HCT116 (cell line): ENCODE measurements at regions of chr4 and their contacts with region 1.

Region 1: GRCh38 chr4:122758033-122758432 is 25.5 kb downstream of the BBS12 start:
- DNase-seq: peak; percentile 28
- ATAC-seq: peak; percentile 66
- H3K4me3 ChIP-seq: no peak overlapping the region
- H3K27ac ChIP-seq: no peak overlapping the region
- H3K4me1 ChIP-seq: peaks cover 0 to 5% of the 10 kb centered on the region in 2 experiments; a peak in 2 of 4 replicates
- H3K27me3 ChIP-seq: no peaks in the 10 kb centered on the region
- CTCF ChIP-seq: peak; percentile 47 to 81 (median 74); a peak in 4 of 6 replicates
- POLR2A ChIP-seq: no peak
- RAD21 ChIP-seq: peak; percentile 83

Region 2: GRCh38 chr4:122732329-122733026 is 25.6 kb before region 1 on chr4 and contains the start of gene BBS12:
- CTCF ChIA-PET with region 1: interaction called, 11 read pairs
- POLR2A ChIA-PET with region 1: no interaction called
- RAD21 ChIA-PET with region 1: no interaction called
- intact Hi-C with region 1: no loop called
- DNase-seq: peak; percentile 98
- ATAC-seq: peak; percentile 97
- H3K4me3 ChIP-seq: peak within 1 kb of the TSS; percentile 78 to 83
- H3K27ac ChIP-seq: peak within 1 kb of the TSS; percentile 49
- H3K4me1 ChIP-seq: peaks cover 4 to 13% of the 10 kb centered on the region in 2 experiments; a peak in 2 of 4 replicates
- H3K27me3 ChIP-seq: no peaks in the 10 kb centered on the region
- CTCF ChIP-seq: peak in 1 of 3 experiments; percentile 38; a peak in 2 of 6 replicates
- POLR2A ChIP-seq: no peak
- RAD21 ChIP-seq: peak; percentile 43; the same call in 1 of the 2 replicates
- total RNA-seq, gene BBS12: 2.1 TPM

Region 3: GRCh38 chr4:122914292-122914904 is 156.4 kb after region 1 on chr4:
- CTCF ChIA-PET with region 1: interaction called, 29 read pairs
- POLR2A ChIA-PET with region 1: no interaction called
- RAD21 ChIA-PET with region 1: interaction called, 3 to 9 read pairs
- intact Hi-C with region 1: loop called (anchors 1 kb)
- DNase-seq: no peak
- ATAC-seq: peak; percentile 82
- H3K4me3 ChIP-seq: no peak overlapping the region
- H3K27ac ChIP-seq: no peak overlapping the region
- H3K4me1 ChIP-seq: peaks cover 4 to 6% of the 10 kb centered on the region in 2 experiments; a peak in 3 of 4 replicates
- H3K27me3 ChIP-seq: no peaks in the 10 kb centered on the region
- CTCF ChIP-seq: peak in 2 of 3 experiments; percentile 46 to 64; a peak in 4 of 6 replicates
- POLR2A ChIP-seq: no peak
- RAD21 ChIP-seq: peak; percentile 77

Region 4: DNA sequence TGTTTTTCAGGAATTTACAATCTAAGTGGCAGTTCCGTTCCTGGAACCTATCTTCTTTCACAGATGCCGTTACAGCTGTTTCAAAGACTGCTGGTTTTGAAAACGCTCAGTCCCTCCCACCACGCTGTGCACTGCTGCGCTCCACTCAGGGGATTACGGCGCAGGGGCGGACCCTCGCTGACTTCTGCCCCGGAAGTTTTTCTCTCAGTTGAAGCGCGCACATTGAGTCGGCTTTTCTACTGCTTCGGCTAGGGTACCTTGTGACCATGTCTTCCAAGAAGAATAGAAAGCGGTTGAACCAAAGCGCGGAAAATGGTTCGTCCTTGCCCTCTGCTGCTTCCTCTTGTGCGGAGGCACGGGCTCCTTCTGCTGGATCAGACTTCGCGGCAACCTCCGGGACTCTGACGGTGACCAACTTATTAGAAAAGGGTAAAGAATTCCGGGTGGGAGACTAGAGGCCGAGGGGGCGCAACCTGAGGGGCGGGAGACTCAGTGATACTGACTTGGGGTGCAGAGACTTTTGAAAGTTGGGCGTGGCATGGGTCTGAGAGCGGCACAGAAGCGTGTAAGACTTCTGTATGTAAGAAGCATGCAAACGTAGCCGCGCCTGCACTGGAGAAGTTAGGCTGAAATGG is 165.0 kb after region 1 on chr4:
- CTCF ChIA-PET with region 1: interaction called, 12 read pairs
- POLR2A ChIA-PET with region 1: no interaction called
- RAD21 ChIA-PET with region 1: no interaction called
- intact Hi-C with region 1: no loop called
- DNase-seq: peak; percentile 73
- ATAC-seq: peak; percentile 91
- H3K4me3 ChIP-seq: peak overlapping the region; percentile 86 to 97
- H3K27ac ChIP-seq: peak overlapping the region; percentile 76
- H3K4me1 ChIP-seq: peaks cover 7 to 15% of the 10 kb centered on the region in 2 experiments; a peak in 3 of 4 replicates
- H3K27me3 ChIP-seq: no peaks in the 10 kb centered on the region
- CTCF ChIP-seq: no peak
- POLR2A ChIP-seq: peak; percentile 53
- RAD21 ChIP-seq: no peak

Region 5: GRCh38 chr4:122930862-122931261 is 172.8 kb after region 1 on chr4:
- CTCF ChIA-PET with region 1: interaction called, 12 read pairs
- POLR2A ChIA-PET with region 1: no interaction called
- RAD21 ChIA-PET with region 1: no interaction called
- intact Hi-C with region 1: no loop called
- DNase-seq: no peak
- ATAC-seq: no peak
- H3K4me3 ChIP-seq: no peak overlapping the region
- H3K27ac ChIP-seq: no peak overlapping the region
- H3K4me1 ChIP-seq: no peaks in the 10 kb centered on the region
- H3K27me3 ChIP-seq: no peaks in the 10 kb centered on the region
- CTCF ChIP-seq: peak in 2 of 3 experiments; percentile 55 to 64; a peak in 3 of 6 replicates
- POLR2A ChIP-seq: no peak
- RAD21 ChIP-seq: peak; percentile 60

Region 6: DNA sequence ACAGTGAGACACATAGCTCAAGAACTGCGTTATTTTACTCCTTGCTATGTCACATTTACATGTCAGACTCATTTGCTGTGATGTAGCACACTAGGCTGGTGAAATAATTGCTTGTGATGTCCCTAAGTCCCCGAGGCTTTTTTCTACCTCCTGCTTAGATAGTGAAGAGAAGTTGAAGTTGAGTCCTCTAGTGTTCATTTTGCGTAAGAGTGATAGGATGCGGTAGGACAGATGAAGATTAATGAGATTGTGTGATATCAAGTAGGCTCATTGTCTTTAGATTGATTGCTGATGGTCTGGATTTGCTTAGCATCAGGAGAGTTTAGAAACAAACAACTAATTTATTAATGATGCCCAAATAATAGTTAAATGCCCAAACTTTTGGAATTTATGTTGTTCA is 338.0 kb after region 1 on chr4:
- CTCF ChIA-PET with region 1: no interaction called
- POLR2A ChIA-PET with region 1: no interaction called
- RAD21 ChIA-PET with region 1: no interaction called
- intact Hi-C with region 1: loop called (anchors 5 kb)
- DNase-seq: peak; percentile 18
- ATAC-seq: peak; percentile 80
- H3K4me3 ChIP-seq: no peak overlapping the region
- H3K27ac ChIP-seq: no peak overlapping the region
- H3K4me1 ChIP-seq: peaks cover 0 to 10% of the 10 kb centered on the region in 2 experiments; a peak in 1 of 4 replicates
- H3K27me3 ChIP-seq: no peaks in the 10 kb centered on the region
- CTCF ChIP-seq: peak; percentile 20 to 59 (median 54); a peak in 5 of 6 replicates
- POLR2A ChIP-seq: no peak
- RAD21 ChIP-seq: peak; percentile 41; the same call in 1 of the 2 replicates